MCF 10A (cell line): ENCODE measurements at regions of chr12 and their contacts with region 1.

Region 1: GRCh38 chr12:132003846-132004245 is 54.1 kb downstream of the EP400 start:
- DNase-seq: no peak
- H3K4me3 Mint-ChIP-seq: no peak overlapping the region
- H3K27ac Mint-ChIP-seq: no peak overlapping the region
- H3K4me1 Mint-ChIP-seq: no peaks in the 10 kb centered on the region
- H3K27me3 Mint-ChIP-seq: no peaks in the 10 kb centered on the region
- CTCF ChIP-seq: no peak

Region 2: GRCh38 chr12:131949431-131950181 is 54.2 kb before region 1 on chr12 and contains the start of gene EP400:
- CTCF ChIA-PET with region 1: interaction called, 3 read pairs
- POLR2A ChIA-PET with region 1: no interaction called
- intact Hi-C with region 1: loop called (anchors 5 kb)
- DNase-seq: peak; percentile 94
- H3K4me3 Mint-ChIP-seq: peak within 1 kb of the TSS; percentile 75
- H3K27ac Mint-ChIP-seq: peak within 1 kb of the TSS; percentile 70
- H3K4me1 Mint-ChIP-seq: peaks cover 9% of the 10 kb centered on the region
- H3K27me3 Mint-ChIP-seq: no peaks in the 10 kb centered on the region
- CTCF ChIP-seq: peak; percentile 54
- total RNA-seq, gene EP400: 52.4 and 54.8 TPM in 2 replicates